PC-3 (cell line): ENCODE measurements at regions of chr1 and their contacts with region 1.

Region 1: GRCh38 chr1:244371242-244372141 is 80.2 kb downstream of the ADSS2 start:
- DNase-seq: no peak
- ATAC-seq: no peak; the same call in 1 of the 2 replicates
- H3K4me3 ChIP-seq: no peak overlapping the region
- H3K27ac ChIP-seq: no peak overlapping the region
- H3K4me1 ChIP-seq: no peaks in the 10 kb centered on the region
- H3K27me3 ChIP-seq: no peaks in the 10 kb centered on the region
- CTCF ChIP-seq: no peak

Region 2: DNA sequence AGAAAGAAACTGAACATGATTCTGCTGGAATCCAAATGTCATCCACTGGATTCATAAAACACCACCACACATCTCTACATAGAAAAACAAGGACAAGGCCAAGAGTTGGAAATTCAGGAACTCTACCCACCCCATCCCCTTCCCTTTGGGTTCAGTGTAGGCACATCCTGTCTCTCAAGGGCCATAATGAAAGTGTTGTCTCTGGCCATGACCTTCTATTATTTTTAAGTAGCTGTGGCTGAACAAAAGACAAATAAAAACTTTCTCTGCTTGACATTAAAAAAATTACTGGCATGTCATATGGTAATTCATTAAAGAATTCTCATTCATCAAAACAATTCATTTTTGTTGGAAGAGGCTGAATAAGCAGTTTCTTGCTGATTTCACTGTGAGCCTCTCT is 375.3 kb before region 1 on chr1:
- CTCF ChIA-PET with region 1: interaction called, 14 read pairs
- POLR2A ChIA-PET with region 1: no interaction called
- intact Hi-C with region 1: no loop called
- DNase-seq: no peak
- ATAC-seq: no peak
- H3K4me3 ChIP-seq: no peak overlapping the region
- H3K27ac ChIP-seq: no peak overlapping the region
- H3K4me1 ChIP-seq: no peaks in the 10 kb centered on the region
- H3K27me3 ChIP-seq: no peaks in the 10 kb centered on the region
- CTCF ChIP-seq: no peak

Region 3: GRCh38 chr1:244353551-244354091 is 17.9 kb before region 1 on chr1:
- CTCF ChIA-PET with region 1: no interaction called
- POLR2A ChIA-PET with region 1: no interaction called
- intact Hi-C with region 1: no loop called
- DNase-seq: peak; percentile 95
- ATAC-seq: peak; percentile 100
- H3K4me3 ChIP-seq: no peak overlapping the region
- H3K27ac ChIP-seq: peak overlapping the region; percentile 75
- H3K4me1 ChIP-seq: peaks cover 27% of the 10 kb centered on the region
- H3K27me3 ChIP-seq: no peaks in the 10 kb centered on the region
- CTCF ChIP-seq: no peak